Activated T-helper 1 cell treated with anti-CD3 and anti-CD28 coated beads, Interleukin-12 subunit alpha, Interleukin-12 subunit beta, Interleukin-2, Interleukin-4 antibody, amounts not matched to agents 30 ng/mL and 10 ng/mL and 1 ng/mL, durations not matched to agents 14 hours and 24 hours and 36 hours (primary cell): ENCODE measurements at regions of chr7 and their contacts with region 1.

Region 1: GRCh38 chr7:130733931-130734814 is at the start of gene KLF14:
- DNase-seq: peak; percentile 12
- H3K4me3 Mint-ChIP-seq: peak within 1 kb of the TSS; percentile 83
- H3K27ac Mint-ChIP-seq: no peak within 1 kb of the TSS
- H3K4me1 Mint-ChIP-seq: peaks cover 8% of the 10 kb centered on the region
- H3K27me3 Mint-ChIP-seq: peaks cover 69% of the 10 kb centered on the region
- total RNA-seq, gene KLF14: not detected in 2 replicates

Region 2: DNA sequence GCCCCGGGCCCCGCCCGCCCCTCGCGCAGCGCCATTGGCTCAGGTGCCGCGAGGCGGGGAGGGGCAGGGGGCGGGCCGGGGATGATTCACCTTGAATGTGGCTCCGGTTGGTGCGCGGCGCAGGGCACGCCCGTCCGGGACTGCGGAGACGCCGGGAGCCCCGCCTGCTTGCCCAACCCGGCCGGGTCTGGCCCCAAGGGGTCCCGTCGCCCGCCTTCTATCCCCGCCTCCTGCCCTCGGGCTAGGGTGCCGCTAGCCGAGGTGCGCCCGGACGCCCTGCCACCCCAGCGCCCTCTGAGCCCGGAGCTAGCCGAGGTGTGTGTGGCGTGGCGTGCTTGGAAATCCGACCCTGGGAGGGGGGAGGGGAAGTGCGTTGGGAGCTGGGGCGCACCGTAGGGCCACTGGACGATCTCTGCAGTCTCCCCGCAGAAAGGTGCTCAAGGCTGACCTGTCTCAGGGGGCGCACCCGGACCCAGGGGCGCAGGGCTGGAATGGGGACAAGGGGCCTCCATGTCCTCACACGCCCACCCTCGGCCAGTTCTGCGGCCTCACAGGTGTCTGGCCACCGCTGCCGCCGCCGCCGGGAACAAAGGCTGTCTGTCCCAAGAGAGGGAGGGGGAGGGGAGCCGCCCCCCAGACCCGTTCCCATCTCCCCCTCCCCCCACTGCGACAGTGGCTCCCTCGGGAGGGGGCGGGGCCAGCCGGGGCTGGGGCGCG is 953.8 kb before region 1 on chr7:
- intact Hi-C with region 1: loop called (anchors 2 kb)
- DNase-seq: peak; percentile 48
- H3K4me3 Mint-ChIP-seq: peak overlapping the region; percentile 63
- H3K27ac Mint-ChIP-seq: no peak overlapping the region
- H3K4me1 Mint-ChIP-seq: peaks cover 23% of the 10 kb centered on the region
- H3K27me3 Mint-ChIP-seq: peaks cover 67% of the 10 kb centered on the region

Region 3: GRCh38 chr7:130491841-130492522 is 242.2 kb before region 1 on chr7 and contains the start of gene MEST:
- intact Hi-C with region 1: loop called (anchors 2 kb)
- DNase-seq: no peak
- H3K4me3 Mint-ChIP-seq: peak within 1 kb of the TSS; percentile 74
- H3K27ac Mint-ChIP-seq: no peak within 1 kb of the TSS
- H3K4me1 Mint-ChIP-seq: peaks cover 8% of the 10 kb centered on the region
- H3K27me3 Mint-ChIP-seq: peaks cover 40% of the 10 kb centered on the region
- total RNA-seq, gene MEST: 4.1 and 9.1 TPM in 2 replicates